Activated CD4-positive, alpha-beta memory T cell treated with anti-CD3 and anti-CD28 coated beads for 36 hours (primary cell): ENCODE measurements at regions of chr4 and their contacts with region 1.

Region 1: DNA sequence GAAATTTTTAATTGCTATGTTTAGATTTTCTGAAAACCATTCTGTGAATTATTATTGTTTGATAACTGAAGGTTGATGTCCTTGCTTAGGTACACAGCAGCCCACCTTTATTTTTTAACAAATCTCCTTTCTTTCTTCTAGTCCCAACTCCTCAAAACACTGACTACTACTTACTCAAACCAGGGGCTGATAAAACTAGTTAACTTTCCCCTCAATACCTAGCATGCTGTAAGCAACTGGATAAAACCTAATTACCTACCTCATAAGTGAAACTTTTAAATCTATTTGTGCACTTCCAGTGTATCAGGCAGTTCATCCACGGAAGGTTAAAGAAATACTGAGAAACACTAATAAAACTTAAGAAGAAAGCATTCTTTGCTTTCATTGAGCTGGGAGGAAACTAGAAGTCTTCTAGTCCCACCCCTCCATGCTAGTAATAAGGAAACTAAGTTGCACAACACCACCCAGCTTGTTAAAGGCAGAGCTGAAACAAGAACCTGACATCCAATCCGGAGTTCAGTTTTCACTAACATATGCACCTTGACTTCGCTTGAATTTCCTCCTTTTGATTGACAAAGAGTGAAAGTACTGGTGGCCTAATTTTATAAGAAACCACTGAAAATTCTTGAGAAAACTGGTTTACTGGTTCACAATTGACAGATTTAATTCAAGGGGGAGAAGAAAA is 180.2 kb upstream of the TET2 start:
- DNase-seq: peak; percentile 47
- H3K4me3 Mint-ChIP-seq: peak overlapping the region; percentile 48
- H3K27ac Mint-ChIP-seq: peak overlapping the region; percentile 79
- H3K4me1 Mint-ChIP-seq: peaks cover 15% of the 10 kb centered on the region
- H3K27me3 Mint-ChIP-seq: peaks cover 5% of the 10 kb centered on the region

Region 2: DNA sequence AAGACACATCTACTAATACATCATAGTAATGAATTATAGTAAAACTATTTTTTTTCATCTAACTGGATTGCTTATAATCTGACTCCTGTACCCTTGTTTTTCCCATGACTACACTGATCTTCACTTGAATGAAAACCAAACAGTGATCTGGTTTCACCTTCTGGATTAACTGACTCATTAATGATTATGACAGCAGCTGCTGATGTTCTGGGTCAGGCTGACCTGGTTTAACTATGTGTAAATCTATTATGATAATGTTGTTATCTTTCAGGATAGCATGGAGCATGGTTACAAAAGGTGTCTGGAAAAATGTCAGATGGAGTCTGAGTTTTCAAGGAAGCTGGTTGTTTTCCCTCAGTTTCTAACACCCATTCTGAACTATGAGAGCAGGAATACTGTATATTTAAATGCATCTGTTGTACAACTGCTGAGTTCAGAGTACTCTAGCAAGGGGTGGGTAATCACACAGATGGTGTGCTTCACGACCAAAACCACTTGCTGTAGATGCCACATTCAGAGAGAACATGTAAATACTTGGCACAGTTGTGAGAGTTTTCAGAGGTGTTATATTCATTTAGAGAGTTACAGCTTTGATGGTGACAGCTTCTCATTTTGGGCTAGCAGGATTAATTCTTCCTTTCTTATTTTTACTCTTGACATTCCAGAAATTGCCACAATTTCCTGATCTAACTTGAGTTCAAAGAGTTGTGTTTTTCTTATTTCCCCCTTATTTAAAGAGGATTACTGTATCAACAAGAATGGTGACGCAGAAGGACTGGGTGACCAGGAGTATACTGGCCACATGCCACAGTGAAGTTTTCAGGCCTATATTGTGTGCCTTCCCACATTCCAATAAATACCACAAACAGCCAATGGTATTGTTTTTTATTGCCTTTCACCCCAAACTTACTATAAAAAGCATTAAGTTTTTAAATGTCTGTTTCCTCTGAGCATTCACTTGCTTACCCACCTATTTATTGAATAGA is 69.5 kb before region 1 on chr4:
- CTCF ChIA-PET with region 1: no interaction called
- POLR2A ChIA-PET with region 1: no interaction called
- intact Hi-C with region 1: loop called (anchors 2 kb)
- DNase-seq: no peak
- H3K4me3 Mint-ChIP-seq: no peak overlapping the region
- H3K27ac Mint-ChIP-seq: no peak overlapping the region
- H3K4me1 Mint-ChIP-seq: peaks cover 7% of the 10 kb centered on the region
- H3K27me3 Mint-ChIP-seq: no peaks in the 10 kb centered on the region

Region 3: DNA sequence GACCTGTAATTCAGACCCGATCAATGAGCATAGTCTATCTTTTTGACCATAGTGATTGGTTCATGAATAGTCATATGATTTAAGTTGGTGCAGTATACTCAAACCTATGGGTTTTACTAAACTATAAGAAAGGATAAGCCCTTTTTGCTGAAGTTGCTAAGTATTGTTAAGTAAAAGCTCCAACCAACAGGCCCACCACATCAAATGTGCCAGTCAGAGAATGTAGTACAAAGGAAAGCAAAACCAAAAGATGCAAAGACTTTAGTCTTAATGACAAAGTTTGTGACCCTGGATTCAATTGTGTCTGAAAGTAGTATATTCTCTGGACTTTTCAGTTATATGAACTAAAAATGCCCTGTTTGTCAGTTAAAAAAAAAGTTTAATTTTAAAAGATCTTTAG is 27.9 kb before region 1 on chr4:
- CTCF ChIA-PET with region 1: no interaction called
- POLR2A ChIA-PET with region 1: no interaction called
- intact Hi-C with region 1: loop called (anchors 2 kb)
- DNase-seq: peak; percentile 31
- H3K4me3 Mint-ChIP-seq: no peak overlapping the region
- H3K27ac Mint-ChIP-seq: no peak overlapping the region
- H3K4me1 Mint-ChIP-seq: peaks cover 19% of the 10 kb centered on the region
- H3K27me3 Mint-ChIP-seq: no peaks in the 10 kb centered on the region

Region 4: GRCh38 chr4:105088110-105088879 is 121.8 kb after region 1 on chr4:
- CTCF ChIA-PET with region 1: no interaction called
- POLR2A ChIA-PET with region 1: no interaction called
- intact Hi-C with region 1: no loop called
- DNase-seq: no peak
- H3K4me3 Mint-ChIP-seq: no peak overlapping the region
- H3K27ac Mint-ChIP-seq: no peak overlapping the region
- H3K4me1 Mint-ChIP-seq: no peaks in the 10 kb centered on the region
- H3K27me3 Mint-ChIP-seq: peaks cover 6% of the 10 kb centered on the region

Region 5: GRCh38 chr4:105191621-105192210 is 225.2 kb after region 1 on chr4:
- CTCF ChIA-PET with region 1: no interaction called
- POLR2A ChIA-PET with region 1: no interaction called
- intact Hi-C with region 1: loop called (anchors 1 kb)
- DNase-seq: no peak
- H3K4me3 Mint-ChIP-seq: no peak overlapping the region
- H3K27ac Mint-ChIP-seq: peak overlapping the region; percentile 83
- H3K4me1 Mint-ChIP-seq: peaks cover 87% of the 10 kb centered on the region
- H3K27me3 Mint-ChIP-seq: no peaks in the 10 kb centered on the region